ENCODE measurements at regions of chr11 and their contacts with region 1.

Region 1: DNA sequence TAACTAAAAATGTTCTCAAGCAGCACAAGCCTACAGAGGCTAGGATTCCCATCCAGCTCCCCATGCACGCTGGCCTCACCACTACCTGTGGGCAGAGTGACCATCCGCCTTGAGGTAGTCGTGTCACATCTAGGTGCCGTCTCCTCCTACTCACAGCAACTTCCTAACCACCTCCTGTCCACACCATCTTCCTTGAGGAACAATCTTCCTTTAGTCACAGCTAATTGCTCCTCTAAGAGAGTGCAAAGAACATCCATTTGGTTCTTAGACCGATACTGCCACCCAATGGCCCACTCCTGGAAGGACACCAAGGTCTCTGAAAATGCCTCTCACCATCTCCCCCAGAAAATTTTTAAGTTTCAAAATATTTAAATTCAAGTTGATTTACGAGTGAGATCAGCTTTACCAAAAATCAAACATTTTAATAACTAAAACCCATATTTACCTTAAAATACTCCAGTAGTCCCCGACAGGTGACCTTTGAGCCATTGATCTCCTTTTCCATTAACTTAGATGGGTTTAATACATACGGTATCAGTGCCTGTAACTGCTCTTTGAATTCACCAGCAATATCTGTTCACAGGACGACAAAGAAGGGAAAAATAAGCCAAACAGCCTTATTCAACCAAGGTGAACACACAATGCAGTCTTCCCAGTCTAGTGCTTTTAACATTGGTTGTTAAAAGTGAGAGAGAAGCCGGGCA is 21.7 kb upstream of the PLAAT3 start:
- DNase-seq: peak; percentile 45 to 76 (median 70)
- ATAC-seq: peak; percentile 88
- H3K4me3 ChIP-seq: no peak overlapping the region
- H3K4me3 Mint-ChIP-seq: no peak overlapping the region
- H3K27ac ChIP-seq: no peak overlapping the region
- H3K27ac Mint-ChIP-seq: no peak overlapping the region
- H3K4me1 ChIP-seq: no peaks in the 10 kb centered on the region
- H3K4me1 Mint-ChIP-seq: peaks cover 7 to 22% (median 16%) of the 10 kb centered on the region in 7 donors
- H3K27me3 ChIP-seq: no peaks in the 10 kb centered on the region
- H3K27me3 Mint-ChIP-seq: no peaks in the 10 kb centered on the region

Region 2: DNA sequence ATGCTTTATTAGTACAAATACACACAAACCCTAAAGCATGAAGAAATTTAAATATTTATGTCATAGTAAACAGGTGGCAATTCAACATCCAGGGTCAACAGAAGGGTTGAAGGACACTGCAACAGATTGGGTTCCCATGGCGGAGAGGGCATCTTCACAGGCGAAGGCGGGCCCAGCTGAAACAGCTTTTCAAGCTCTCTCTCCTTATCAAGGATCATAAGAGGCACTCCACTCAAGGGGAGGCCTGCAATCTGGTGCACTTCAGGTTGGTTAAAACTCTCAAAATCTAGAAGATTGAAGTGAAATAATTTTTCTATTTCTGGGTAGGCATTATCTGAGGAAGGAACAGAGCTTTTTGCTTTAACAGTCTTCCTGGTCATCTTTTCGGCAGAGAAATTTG is 603.5 kb before region 1 on chr11:
- CTCF ChIA-PET with region 1: interaction called, 6 read pairs
- POLR2A ChIA-PET with region 1: interaction called, 3 read pairs
- intact Hi-C with region 1: loop called (anchors 1 to 5 kb)
- DNase-seq: no peak
- ATAC-seq: no peak
- H3K4me3 ChIP-seq: no peak overlapping the region
- H3K4me3 Mint-ChIP-seq: no peak overlapping the region
- H3K27ac ChIP-seq: no peak overlapping the region
- H3K27ac Mint-ChIP-seq: no peak overlapping the region
- H3K4me1 ChIP-seq: no peaks in the 10 kb centered on the region
- H3K4me1 Mint-ChIP-seq: peaks cover 0 to 6% (median 0%) of the 10 kb centered on the region in 7 donors
- H3K27me3 ChIP-seq: no peaks in the 10 kb centered on the region
- H3K27me3 Mint-ChIP-seq: peaks cover 15 to 27% (median 21%) of the 10 kb centered on the region in 5 donors

Region 3: DNA sequence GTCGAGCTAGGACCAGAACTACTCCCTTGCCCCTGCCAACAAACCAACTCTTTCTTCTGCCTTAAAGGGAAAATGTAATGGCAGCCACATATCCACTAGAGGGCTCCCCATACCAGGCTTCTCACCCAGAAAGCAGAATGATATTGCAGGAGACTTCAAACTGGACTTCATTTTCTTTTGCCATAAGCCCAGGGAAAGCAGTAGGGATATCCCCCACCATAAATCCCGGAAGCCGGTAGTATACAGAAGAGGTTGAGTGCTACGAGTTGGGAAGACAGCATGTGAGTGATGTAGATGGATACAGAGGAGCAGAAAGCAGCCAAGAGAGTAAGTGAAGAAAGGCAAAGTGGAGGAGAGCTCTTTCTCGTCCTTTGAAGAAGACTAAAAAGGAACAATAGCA is 157.0 kb before region 1 on chr11:
- CTCF ChIA-PET with region 1: interaction called, 89 read pairs
- POLR2A ChIA-PET with region 1: interaction called, 9 read pairs
- intact Hi-C with region 1: loop called (anchors 1 kb)
- DNase-seq: peak; percentile 20 to 74 (median 65)
- ATAC-seq: peak; percentile 82
- H3K4me3 ChIP-seq: no peak overlapping the region
- H3K4me3 Mint-ChIP-seq: no peak overlapping the region
- H3K27ac ChIP-seq: no peak overlapping the region
- H3K27ac Mint-ChIP-seq: no peak overlapping the region
- H3K4me1 ChIP-seq: no peaks in the 10 kb centered on the region
- H3K4me1 Mint-ChIP-seq: no peaks in the 10 kb centered on the region
- H3K27me3 ChIP-seq: no peaks in the 10 kb centered on the region
- H3K27me3 Mint-ChIP-seq: peaks cover 0 to 43% (median 6%) of the 10 kb centered on the region in 5 donors

Region 4: DNA sequence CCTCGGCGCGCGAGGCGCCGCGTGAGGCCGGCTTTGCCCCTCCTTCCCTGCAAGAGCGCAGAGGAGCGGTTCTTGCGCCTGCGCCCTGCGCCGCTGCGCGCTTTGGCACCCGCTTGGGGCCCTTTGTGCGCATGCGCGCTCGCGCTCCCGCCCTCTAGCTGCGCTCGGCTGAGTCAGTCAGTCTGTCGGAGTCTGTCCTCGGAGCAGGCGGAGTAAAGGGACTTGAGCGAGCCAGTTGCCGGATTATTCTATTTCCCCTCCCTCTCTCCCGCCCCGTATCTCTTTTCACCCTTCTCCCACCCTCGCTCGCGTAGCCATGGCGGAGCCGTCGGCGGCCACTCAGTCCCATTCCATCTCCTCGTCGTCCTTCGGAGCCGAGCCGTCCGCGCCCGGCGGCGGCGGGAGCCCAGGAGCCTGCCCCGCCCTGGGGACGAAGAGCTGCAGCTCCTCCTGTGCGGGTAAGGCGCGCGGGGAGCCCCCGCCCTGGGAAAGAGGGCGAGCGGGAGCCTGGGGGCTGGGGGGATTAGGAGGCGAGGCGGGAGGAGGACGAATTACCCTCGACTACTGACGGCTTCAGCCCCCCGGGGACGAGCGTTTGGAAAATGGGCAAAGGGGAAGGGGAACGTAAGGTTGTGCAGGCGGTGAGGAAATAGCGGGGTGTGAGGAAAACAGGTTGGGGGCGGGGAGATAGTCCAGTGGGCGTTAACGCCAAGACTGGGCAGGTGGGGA is 45.6 kb after region 1 on chr11 and contains the start of gene RTN3:
- CTCF ChIA-PET with region 1: no interaction called
- POLR2A ChIA-PET with region 1: no interaction called
- intact Hi-C with region 1: loop called in 1 of 2 experiments (anchors 1 kb)
- DNase-seq: peak; percentile 97 to 99 (median 98)
- ATAC-seq: peak; percentile 95
- H3K4me3 ChIP-seq: peak within 1 kb of the TSS; percentile 86
- H3K4me3 Mint-ChIP-seq: peak within 1 kb of the TSS; percentile 89 to 97 (median 94)
- H3K27ac ChIP-seq: peak within 1 kb of the TSS; percentile 69
- H3K27ac Mint-ChIP-seq: peak within 1 kb of the TSS; percentile 50 to 97 (median 83)
- H3K4me1 ChIP-seq: peaks cover 6 to 17% of the 10 kb centered on the region in 2 donors
- H3K4me1 Mint-ChIP-seq: peaks cover 20 to 30% (median 27%) of the 10 kb centered on the region in 7 donors
- H3K27me3 ChIP-seq: no peaks in the 10 kb centered on the region
- H3K27me3 Mint-ChIP-seq: peaks cover 0 to 12% (median 0%) of the 10 kb centered on the region in 5 donors
- total RNA-seq, gene RTN3: 20.8 to 65.7 (median 34.4) TPM

Region 5: DNA sequence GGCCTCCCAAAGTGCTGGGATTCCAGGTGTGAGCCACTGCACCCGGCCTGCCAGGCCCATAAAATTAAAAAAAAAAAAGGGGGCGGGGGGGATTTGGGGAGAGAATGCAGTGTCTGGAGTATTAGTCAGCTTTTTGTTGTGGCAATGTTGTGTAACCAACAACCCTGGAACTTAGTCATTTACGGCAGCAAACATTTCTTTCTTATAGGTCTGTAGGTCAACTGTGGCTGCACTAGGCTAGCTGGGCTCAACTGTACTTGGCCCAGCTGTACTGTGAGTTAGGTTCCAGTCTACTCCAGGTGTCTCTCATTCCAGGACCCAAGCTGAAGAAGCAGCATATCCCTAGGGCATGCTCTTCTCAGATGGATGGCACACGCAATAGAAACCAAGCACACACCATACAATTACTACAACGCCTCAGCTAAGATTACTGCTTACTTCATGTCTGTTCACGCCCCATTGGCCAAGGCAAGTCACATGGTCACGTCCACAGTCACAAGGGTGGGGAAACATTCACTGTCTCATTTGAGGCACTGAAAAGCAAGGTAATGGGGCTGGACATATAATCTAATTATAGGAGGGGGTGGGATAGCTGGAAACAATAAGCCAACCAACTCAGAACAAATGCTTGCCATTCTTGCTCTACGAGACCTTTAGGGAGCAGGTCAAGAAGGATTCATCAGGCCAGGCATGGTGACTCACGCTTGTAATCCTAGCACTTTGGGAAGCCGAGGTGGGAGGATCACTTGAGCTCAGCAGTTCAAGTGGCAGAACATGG is 166.9 kb after region 1 on chr11:
- CTCF ChIA-PET with region 1: no interaction called
- POLR2A ChIA-PET with region 1: no interaction called
- intact Hi-C with region 1: no loop called
- DNase-seq: no peak
- ATAC-seq: no peak
- H3K4me3 ChIP-seq: no peak overlapping the region
- H3K4me3 Mint-ChIP-seq: no peak overlapping the region
- H3K27ac ChIP-seq: no peak overlapping the region
- H3K27ac Mint-ChIP-seq: no peak overlapping the region
- H3K4me1 ChIP-seq: no peaks in the 10 kb centered on the region
- H3K4me1 Mint-ChIP-seq: peaks cover 0 to 2% (median 0%) of the 10 kb centered on the region in 7 donors
- H3K27me3 ChIP-seq: no peaks in the 10 kb centered on the region
- H3K27me3 Mint-ChIP-seq: peaks cover 0 to 16% (median 4%) of the 10 kb centered on the region in 5 donors